PC-9 (cell line): ENCODE measurements at regions of chr17 and their contacts with region 1.

Region 1: GRCh38 chr17:81379523-81379942 is 15.7 kb upstream of the BAHCC1 start:
- DNase-seq: peak; percentile 76 to 90
- H3K4me3 ChIP-seq: peak overlapping the region; percentile 33; the same call in 1 of the 2 replicates
- H3K27ac ChIP-seq: no peak overlapping the region
- H3K4me1 ChIP-seq: no peaks in the 10 kb centered on the region
- H3K27me3 ChIP-seq: no peaks in the 10 kb centered on the region
- CTCF ChIP-seq: no peak

Region 2: GRCh38 chr17:81445642-81446503 is 66.3 kb after region 1 on chr17:
- CTCF ChIA-PET with region 1: no interaction called
- POLR2A ChIA-PET with region 1: interaction called, 12 read pairs
- intact Hi-C with region 1: no loop called
- DNase-seq: no peak
- H3K4me3 ChIP-seq: no peak overlapping the region
- H3K27ac ChIP-seq: no peak overlapping the region
- H3K4me1 ChIP-seq: no peaks in the 10 kb centered on the region
- H3K27me3 ChIP-seq: no peaks in the 10 kb centered on the region
- CTCF ChIP-seq: no peak